ENCODE measurements at regions of chr1 and their contacts with region 1.

Region 1: GRCh38 chr1:172429331-172430127 is 9.0 kb downstream of the C1orf105 start:
- DNase-seq: peak; percentile 55
- ATAC-seq: peak; percentile 88
- H3K4me3 ChIP-seq: no peak overlapping the region
- H3K27ac ChIP-seq: peak overlapping the region; percentile 58; the same call in 1 of the 2 replicates
- H3K4me1 ChIP-seq: peaks cover 4% of the 10 kb centered on the region; the same call in 1 of the 2 replicates
- H3K27me3 ChIP-seq: no peaks in the 10 kb centered on the region
- CTCF ChIP-seq: peak; percentile 84

Region 2: DNA sequence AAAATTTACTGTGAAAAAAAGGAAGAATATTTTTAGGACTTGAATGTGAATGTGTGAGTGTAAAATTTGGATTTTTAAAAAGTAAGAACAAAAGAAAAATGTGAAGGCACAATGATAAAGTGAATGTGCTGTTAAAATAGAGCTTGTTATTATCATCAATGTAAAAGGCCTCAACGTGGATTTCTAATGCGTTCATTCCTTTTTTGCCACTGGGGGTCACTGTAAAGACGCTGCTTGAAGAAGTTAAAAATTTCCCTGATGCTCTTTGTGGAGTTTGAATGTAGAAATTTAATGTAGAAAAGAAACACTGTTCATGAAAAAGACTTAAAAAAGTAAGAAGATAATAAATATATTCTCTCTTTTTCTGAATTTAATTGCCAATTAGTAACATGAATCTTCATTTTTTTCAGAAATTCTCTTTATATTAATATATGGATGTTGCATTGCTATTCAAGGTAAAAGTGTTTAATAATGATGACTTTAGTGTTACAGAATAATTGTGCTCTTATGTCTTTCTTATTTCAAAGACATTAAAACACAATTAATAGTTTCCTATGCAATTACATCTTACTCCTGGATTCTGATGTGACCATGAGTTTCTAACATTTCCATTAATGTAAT is 426.7 kb before region 1 on chr1:
- CTCF ChIA-PET with region 1: interaction called, 5 read pairs
- POLR2A ChIA-PET with region 1: no interaction called
- in situ Hi-C with region 1: no loop called
- intact Hi-C with region 1: loop called (anchors 5 kb)
- DNase-seq: peak; percentile 65
- ATAC-seq: peak; percentile 81
- H3K4me3 ChIP-seq: no peak overlapping the region
- H3K27ac ChIP-seq: peak overlapping the region; percentile 86; the same call in 1 of the 2 replicates
- H3K4me1 ChIP-seq: peaks cover 5% of the 10 kb centered on the region; the same call in 1 of the 2 replicates
- H3K27me3 ChIP-seq: no peaks in the 10 kb centered on the region
- CTCF ChIP-seq: peak; percentile 81; the same call in 1 of the 2 replicates

Region 3: DNA sequence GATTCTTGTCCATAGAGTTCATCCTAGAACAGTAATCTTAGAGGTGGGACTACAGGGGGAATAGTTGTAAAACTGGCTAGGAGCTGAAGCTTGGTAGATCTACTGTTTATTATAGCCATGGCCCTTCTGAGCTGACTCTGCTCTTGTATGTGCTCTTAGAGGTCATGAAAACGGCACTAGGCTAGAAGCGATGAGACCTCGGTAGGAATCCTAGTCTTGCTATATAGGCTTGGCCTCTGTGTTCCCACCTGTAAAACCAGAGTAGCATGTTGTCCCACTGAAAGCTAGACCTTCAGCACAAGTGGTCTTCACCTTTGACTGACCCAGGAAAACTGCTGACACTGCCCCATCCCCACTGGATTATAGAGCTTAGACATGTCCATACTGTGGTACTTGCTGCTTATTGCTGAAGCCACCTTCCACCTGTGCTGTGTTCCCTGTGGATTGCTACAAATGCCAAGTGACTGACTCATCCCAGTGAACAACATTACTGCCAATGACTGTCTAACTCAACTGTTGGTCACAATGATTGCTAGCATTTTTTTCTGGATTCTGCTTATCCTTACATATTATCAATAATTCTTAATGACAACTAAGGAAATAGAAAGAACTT is 37.4 kb after region 1 on chr1:
- CTCF ChIA-PET with region 1: no interaction called
- POLR2A ChIA-PET with region 1: no interaction called
- in situ Hi-C with region 1: no loop called
- intact Hi-C with region 1: no loop called
- DNase-seq: no peak
- ATAC-seq: no peak
- H3K4me3 ChIP-seq: no peak overlapping the region
- H3K27ac ChIP-seq: no peak overlapping the region
- H3K4me1 ChIP-seq: no peaks in the 10 kb centered on the region
- H3K27me3 ChIP-seq: no peaks in the 10 kb centered on the region; the same call in 1 of the 2 replicates
- CTCF ChIP-seq: no peak

Region 4: GRCh38 chr1:172662464-172663109 is 233.1 kb after region 1 on chr1:
- CTCF ChIA-PET with region 1: interaction called, 10 read pairs
- POLR2A ChIA-PET with region 1: no interaction called
- in situ Hi-C with region 1: no loop called
- intact Hi-C with region 1: no loop called
- DNase-seq: no peak
- ATAC-seq: no peak
- H3K4me3 ChIP-seq: no peak overlapping the region
- H3K27ac ChIP-seq: no peak overlapping the region
- H3K4me1 ChIP-seq: no peaks in the 10 kb centered on the region
- H3K27me3 ChIP-seq: no peaks in the 10 kb centered on the region
- CTCF ChIP-seq: no peak

Measured in Panc1 (cell line).